ENCODE measurements at regions of chr12 and their contacts with region 1.

Region 1: DNA sequence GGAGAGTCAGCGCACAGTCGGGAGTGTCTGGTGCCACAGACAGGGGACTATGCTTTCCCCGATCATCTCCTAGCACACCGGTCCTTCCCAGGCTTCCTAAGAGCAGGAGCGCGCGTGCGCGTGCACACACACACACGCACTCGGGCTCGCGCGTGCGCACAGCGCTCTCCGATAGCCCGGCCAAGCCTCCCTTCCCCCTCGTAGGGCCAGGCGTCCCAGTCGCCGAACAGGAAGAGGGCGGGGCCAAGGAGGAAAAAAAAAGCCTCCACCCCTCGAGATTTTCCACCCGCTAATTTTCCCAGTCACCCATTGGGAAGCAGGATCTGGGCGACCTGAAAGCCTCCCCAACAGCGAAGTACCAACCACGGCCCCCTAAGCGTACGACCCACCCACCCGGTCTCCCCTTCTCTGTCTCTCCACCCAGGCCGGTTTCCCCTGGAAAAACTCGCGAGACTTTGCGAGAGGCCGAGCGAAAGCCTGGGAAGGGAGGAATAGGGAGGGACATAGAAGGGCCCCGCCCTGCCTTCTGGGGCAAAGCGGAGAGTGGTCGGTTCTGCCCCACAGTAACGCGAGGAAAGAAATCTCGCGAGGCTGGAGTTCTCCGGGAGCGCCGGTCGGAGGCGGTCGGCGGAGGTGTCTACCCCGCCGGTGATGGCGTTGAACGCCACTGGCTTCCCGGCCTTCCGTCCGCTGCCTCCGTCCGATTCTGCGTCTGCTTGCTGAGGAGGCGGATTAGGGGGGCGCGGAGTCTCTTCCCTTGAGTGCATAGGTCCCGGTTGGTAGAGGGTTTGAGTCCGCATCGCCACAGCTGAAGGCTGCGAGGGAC is at the starts of genes FGFR1OP2 and INTS13:
- DNase-seq: peak; percentile 89
- ATAC-seq: peak; percentile 92
- H3K4me3 Mint-ChIP-seq: peak within 1 kb of the TSS; percentile 99
- H3K27ac Mint-ChIP-seq: peak within 1 kb of the TSS; percentile 99
- H3K4me1 Mint-ChIP-seq: peaks cover 73% of the 10 kb centered on the region
- H3K27me3 Mint-ChIP-seq: no peaks in the 10 kb centered on the region
- CTCF ChIP-seq: no peak
- total RNA-seq, gene FGFR1OP2: 42.7 and 45.0 TPM in 2 replicates
- total RNA-seq, gene INTS13: 25.0 and 25.2 TPM in 2 replicates

Region 2: GRCh38 chr12:26113853-26114719 is 824.0 kb before region 1 on chr12:
- CTCF ChIA-PET with region 1: no interaction called
- POLR2A ChIA-PET with region 1: no interaction called
- intact Hi-C with region 1: loop called (anchors 1 kb)
- DNase-seq: peak; percentile 77
- ATAC-seq: peak; percentile 80
- H3K4me3 Mint-ChIP-seq: peak overlapping the region; percentile 85
- H3K27ac Mint-ChIP-seq: peak overlapping the region; percentile 92
- H3K4me1 Mint-ChIP-seq: peaks cover 58% of the 10 kb centered on the region
- H3K27me3 Mint-ChIP-seq: no peaks in the 10 kb centered on the region
- CTCF ChIP-seq: no peak

Region 3: DNA sequence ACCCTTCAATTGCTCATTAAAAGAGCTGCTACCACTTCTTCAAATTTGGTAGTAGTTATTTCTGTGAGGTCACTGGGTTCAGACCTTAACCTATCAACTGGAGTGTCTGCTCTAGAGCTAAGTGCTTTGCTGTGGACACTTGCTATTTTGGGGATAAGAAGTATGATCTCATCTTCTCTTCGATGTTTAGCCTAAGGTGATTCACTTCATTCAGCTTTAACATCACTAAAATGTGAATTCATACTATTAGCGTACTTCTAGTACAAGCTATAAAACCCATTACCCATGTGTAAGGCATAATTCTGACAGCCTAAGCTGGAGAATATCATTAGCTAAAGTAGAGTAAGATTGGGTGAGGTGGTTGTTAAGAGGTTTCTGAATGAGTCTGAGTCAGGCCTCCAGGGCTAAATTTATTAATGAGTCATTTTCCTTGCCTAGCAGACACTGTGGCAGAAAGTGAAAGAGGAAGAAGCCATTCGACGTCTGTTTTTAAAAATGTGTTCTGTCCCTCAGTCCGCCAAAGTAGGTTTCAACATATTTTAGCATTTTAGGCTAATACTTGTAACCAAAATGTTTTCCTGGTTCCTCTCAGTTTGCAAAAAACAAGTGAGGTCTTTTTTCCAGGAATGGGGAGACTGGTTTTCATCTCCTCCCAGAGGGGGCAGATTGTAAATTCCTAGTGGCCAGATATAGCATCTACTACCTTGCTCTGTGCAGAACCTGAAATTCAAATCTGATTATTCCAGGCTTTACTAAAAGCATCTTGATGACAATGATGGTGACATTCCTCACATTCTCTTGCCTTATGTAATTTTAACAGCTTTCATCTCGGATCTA is 639.1 kb before region 1 on chr12:
- CTCF ChIA-PET with region 1: no interaction called
- POLR2A ChIA-PET with region 1: no interaction called
- intact Hi-C with region 1: loop called (anchors 5 kb)
- DNase-seq: no peak
- ATAC-seq: peak; percentile 98
- H3K4me3 Mint-ChIP-seq: peak overlapping the region; percentile 63
- H3K27ac Mint-ChIP-seq: peak overlapping the region; percentile 80
- H3K4me1 Mint-ChIP-seq: peaks cover 34% of the 10 kb centered on the region
- H3K27me3 Mint-ChIP-seq: no peaks in the 10 kb centered on the region
- CTCF ChIP-seq: no peak

Region 4: DNA sequence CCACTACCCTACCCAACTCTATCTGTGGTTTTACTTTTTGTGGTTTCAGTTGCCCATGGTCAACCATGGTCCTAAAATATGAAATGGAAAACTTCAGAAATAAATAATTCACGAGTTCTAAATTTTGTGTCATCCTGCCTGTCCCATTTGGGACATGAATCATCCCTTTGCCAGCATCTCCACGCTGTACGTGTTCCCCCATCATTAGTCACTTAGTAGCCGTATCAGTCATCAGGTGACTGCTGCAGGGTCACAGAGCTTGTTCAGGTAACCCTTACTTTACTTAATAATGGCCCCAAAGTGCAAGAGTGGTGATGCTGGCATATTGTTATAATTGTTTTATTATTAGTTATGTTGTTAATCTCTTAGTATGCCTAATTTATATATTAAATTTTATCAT is 315.0 kb before region 1 on chr12:
- CTCF ChIA-PET with region 1: no interaction called
- POLR2A ChIA-PET with region 1: no interaction called
- intact Hi-C with region 1: no loop called
- DNase-seq: no peak
- ATAC-seq: no peak
- H3K4me3 Mint-ChIP-seq: no peak overlapping the region
- H3K27ac Mint-ChIP-seq: no peak overlapping the region
- H3K4me1 Mint-ChIP-seq: no peaks in the 10 kb centered on the region
- H3K27me3 Mint-ChIP-seq: no peaks in the 10 kb centered on the region
- CTCF ChIP-seq: no peak

Region 5: DNA sequence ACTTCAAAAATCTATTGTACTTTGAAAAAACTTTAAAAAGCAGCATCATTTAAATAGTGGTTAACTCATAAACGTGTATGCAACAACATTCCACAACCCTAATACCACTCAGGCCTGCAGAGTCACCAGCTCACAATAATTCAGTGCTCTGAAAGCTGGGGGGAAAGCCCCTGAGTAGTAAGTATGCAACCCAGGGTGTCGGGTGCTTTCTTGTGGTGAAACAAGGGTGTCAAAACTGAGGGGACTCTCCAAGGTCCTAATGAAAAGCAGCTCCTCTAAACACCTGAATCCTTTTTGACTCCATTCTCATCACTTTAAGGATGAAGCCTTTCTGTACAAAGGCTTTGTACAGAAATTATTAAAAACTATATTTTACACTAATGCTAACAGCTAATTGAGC is 33.9 kb after region 1 on chr12:
- CTCF ChIA-PET with region 1: no interaction called
- POLR2A ChIA-PET with region 1: no interaction called
- intact Hi-C with region 1: loop called (anchors 1 kb)
- DNase-seq: no peak
- ATAC-seq: peak; percentile 97
- H3K4me3 Mint-ChIP-seq: no peak overlapping the region
- H3K27ac Mint-ChIP-seq: peak overlapping the region; percentile 30
- H3K4me1 Mint-ChIP-seq: peaks cover 26% of the 10 kb centered on the region
- H3K27me3 Mint-ChIP-seq: no peaks in the 10 kb centered on the region
- CTCF ChIP-seq: no peak

Region 6: DNA sequence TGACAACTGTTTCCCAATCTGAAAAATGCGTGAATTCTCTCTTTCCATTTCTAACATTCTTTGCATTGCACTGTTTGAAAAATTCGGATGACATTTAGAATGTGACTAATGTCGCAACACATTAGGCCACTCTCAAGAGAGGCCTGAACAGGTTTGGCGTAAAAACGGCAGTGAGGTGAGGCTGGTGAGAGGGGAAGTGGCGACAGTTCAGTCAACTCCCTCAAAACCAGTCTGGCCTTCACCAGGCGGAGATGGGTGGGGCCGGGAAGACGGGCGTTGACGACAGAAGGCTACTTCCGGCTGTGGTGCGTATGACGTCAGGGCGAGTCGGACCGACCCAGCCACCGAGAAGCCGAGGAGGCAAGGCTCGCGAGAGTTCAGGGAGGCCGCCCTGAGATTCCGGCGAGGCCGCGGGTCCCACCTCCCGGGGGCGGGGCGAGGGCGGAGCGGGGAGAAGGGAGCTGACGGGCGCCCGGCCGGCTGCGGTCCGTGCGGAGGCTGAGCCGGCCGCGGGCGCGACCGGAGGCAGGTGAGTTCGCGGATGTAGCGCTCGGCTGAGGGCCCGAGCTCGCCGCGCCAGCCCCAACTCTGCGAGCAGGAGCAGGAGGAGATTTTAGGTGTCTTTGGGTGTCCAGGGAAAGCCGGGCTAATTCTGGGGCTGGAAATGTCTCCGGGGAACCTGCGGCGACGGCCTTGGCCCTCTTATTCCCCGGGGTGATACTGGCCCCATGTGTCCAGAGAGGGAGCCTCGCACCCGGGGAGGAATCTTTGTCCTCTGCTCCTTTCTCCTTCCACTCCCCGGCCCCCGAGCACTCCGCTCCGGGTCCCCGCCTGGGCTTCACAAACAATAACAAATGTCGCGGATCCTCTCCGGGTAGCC is 306.0 kb after region 1 on chr12 and contains the start of gene STK38L:
- CTCF ChIA-PET with region 1: no interaction called
- POLR2A ChIA-PET with region 1: no interaction called
- intact Hi-C with region 1: loop called (anchors 2 kb)
- DNase-seq: peak; percentile 97
- ATAC-seq: peak; percentile 97
- H3K4me3 Mint-ChIP-seq: peak within 1 kb of the TSS; percentile 98
- H3K27ac Mint-ChIP-seq: peak within 1 kb of the TSS; percentile 95
- H3K4me1 Mint-ChIP-seq: peaks cover 46% of the 10 kb centered on the region
- H3K27me3 Mint-ChIP-seq: no peaks in the 10 kb centered on the region
- CTCF ChIP-seq: no peak
- total RNA-seq, gene STK38L: 24.2 and 26.3 TPM in 2 replicates

Region 7: DNA sequence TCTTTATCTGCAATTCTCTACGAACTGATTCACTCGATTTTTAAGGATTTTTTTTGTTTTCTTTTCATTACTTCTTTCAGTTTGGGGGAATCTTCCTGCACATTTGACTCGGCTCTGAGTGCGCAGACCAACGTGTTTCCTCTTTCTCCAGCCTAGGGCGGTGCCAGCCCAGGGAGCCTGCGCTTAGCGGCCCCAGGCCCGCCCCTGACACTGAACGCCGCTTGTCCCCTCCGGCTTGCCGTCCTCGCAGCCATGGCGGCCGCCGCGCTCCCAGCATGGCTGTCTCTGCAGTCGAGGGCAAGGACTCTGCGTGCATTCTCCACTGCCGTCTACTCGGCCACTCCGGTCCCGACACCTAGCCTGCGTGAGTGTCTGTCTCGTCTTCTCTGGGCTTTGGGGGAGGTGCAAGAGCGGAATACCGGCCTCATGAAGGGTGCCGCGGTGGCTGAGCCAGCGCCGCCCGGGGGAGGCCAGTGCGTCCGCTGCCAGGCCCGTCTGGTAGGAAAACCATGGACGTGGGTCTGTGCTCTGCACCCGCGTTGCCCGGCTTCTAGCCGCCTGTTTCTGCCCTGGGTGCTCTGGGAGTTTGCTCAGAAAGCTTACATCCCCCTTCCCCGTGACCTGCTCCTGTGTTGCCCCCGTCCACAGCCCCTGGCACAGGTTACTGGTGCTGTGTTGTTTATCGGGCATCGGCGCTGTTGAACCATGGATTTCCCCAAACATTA is 772.7 kb after region 1 on chr12 and contains the start of gene MRPS35:
- CTCF ChIA-PET with region 1: no interaction called
- POLR2A ChIA-PET with region 1: no interaction called
- intact Hi-C with region 1: loop called (anchors 1 kb)
- DNase-seq: peak; percentile 92
- ATAC-seq: peak; percentile 99
- H3K4me3 Mint-ChIP-seq: peak within 1 kb of the TSS; percentile 99
- H3K27ac Mint-ChIP-seq: peak within 1 kb of the TSS; percentile 99
- H3K4me1 Mint-ChIP-seq: peaks cover 29% of the 10 kb centered on the region
- H3K27me3 Mint-ChIP-seq: no peaks in the 10 kb centered on the region
- CTCF ChIP-seq: no peak
- total RNA-seq, gene MRPS35: 36.2 and 36.8 TPM in 2 replicates